Cardiac septum (tissue), 1 donor: ENCODE measurements at regions of chr3 and their contacts with region 1.

Region 1: GRCh38 chr3:99681512-99681911 is 43.1 kb downstream of the COL8A1 start:
- DNase-seq: no peak

Region 2: DNA sequence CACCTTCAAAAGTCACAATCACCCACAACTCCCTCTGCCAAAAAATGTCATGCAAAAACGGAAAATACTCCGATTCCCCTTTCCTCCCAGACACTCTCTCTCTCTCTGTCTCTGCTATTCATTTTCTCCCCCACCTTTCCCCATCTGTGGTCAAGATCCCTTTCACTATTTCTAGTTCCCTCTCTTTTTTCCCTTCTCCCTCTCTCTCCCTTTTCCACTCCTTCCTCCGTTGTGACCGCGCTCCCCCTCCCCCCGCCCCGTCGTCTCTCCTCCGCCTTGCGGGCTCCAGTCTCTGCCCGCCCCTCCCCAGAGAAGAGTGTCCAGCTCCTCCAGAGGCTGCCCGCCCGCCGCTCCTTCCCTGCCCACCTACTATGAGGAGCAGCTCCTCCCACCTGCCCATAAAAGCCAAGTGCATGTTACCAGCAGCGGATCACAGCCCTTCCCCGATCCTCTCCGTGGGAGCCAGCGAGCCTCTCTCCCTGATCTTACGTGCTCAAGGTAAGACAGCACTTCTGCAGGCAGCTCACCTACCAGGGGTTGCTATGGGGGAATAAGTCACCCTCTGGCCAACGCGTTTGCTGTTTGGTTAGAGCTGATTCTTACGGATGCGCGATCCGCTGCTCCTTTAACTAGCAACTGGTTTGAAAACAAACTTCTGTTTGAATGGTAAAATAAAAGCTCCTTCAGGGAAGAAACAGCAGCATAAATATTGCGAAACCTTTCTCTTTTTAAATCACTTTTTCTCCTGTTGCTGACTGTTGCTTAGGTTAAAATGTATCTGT is 43.2 kb before region 1 on chr3 and contains the start of gene COL8A1:
- intact Hi-C with region 1: loop called (anchors 5 kb)
- DNase-seq: peak; percentile 80
- total RNA-seq, gene COL8A1: 28.5 TPM